Ascending aorta (tissue), 2 donors: ENCODE measurements at regions of chr14 and their contacts with region 1.

Region 1: GRCh38 chr14:96027431-96028355 is 11.5 kb upstream of the C14orf132 start:
- DNase-seq: no peak
- H3K4me3 ChIP-seq: no peak overlapping the region
- H3K27ac ChIP-seq: no peak overlapping the region
- H3K4me1 ChIP-seq: no peaks in the 10 kb centered on the region
- H3K27me3 ChIP-seq: no peaks in the 10 kb centered on the region
- CTCF ChIP-seq: no peak

Region 2: DNA sequence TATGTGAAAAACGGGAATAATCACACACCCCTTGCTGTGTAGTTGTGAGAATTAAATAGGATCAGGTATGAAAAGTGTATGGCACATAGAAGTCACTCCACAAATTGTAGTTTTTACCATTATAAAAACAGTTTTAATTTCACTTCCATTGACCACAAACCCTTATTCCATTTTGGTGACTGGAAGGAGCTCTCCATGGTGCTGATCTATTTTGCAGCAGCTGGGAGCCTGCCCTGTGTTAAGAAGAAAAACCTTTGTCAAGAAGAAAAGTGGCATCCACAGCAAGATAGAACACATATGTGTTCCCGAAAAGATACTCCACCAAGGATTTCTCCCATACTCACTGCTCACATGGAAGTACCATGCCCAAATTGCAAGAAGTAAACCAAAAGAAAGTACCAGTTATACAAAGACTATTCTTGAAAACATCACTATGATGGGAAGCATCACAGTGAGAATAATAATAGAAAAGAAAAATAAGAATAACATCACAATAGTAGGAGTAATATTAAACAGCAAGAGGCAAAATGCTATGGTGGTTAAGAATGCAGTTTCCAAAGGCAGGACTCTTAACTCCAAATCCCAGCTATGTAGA is 92.4 kb before region 1 on chr14:
- intact Hi-C with region 1: no loop called
- DNase-seq: no peak
- H3K4me3 ChIP-seq: no peak overlapping the region
- H3K27ac ChIP-seq: no peak overlapping the region
- H3K4me1 ChIP-seq: no peaks in the 10 kb centered on the region
- H3K27me3 ChIP-seq: no peaks in the 10 kb centered on the region
- CTCF ChIP-seq: no peak

Region 3: DNA sequence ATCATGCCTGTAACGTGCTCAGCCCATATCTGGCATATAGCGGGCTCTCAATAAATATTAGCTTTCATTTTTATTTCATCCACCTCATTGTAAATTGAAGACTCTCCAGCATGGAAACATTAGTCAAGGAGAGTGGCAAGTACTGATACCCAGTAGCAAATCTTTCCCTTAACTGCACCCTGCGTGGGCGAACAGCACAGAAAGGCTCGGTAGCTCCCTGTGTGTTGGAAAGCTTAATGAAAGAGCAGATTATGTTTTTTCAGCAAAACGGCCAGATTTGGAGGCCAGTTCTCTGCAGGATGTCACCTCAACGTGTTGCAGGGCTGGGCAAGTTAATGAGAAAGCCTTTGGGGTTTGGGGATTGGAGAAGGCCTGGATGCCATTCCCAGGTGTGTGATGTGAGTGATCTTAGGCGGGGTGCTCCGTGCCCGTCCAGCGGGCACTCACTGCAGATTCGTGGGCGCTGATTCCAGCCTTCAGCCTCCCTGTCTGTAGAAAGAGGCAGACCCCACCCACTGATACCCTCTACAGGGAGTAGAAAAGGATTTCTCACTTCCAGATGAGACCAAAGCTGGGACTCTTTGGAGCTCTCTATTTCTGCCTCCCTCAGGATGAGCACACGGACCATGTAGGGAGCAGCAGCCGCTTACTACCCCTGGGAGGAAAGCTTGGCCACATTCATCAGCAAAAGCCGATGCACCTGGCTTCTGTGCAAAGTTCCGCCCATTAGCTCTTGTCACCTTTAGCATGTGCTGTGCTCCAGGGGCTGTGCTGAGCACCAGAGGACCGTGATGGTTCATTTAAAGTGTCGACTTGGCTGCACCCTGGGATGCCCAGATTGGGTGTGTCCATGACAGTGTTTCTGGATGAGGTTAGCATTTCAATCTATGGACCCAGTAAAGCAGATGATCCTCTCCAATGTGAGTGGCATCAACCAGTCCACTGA is 40.6 kb after region 1 on chr14:
- intact Hi-C with region 1: loop called (anchors 1 kb)
- DNase-seq: peak in 1 of 2 donors; percentile 33
- H3K4me3 ChIP-seq: no peak overlapping the region
- H3K27ac ChIP-seq: no peak overlapping the region
- H3K4me1 ChIP-seq: peaks cover 0 to 5% of the 10 kb centered on the region in 2 donors
- H3K27me3 ChIP-seq: no peaks in the 10 kb centered on the region
- CTCF ChIP-seq: no peak